ENCODE measurements at regions of chr3 and their contacts with region 1.

Region 1: GRCh38 chr3:120795017-120795648 is 52.6 kb downstream of the GTF2E1 start:
- DNase-seq: peak; percentile 75 to 80 (median 76)
- H3K4me3 ChIP-seq: no peak overlapping the region
- H3K4me3 Mint-ChIP-seq: no peak overlapping the region
- H3K27ac ChIP-seq: no peak overlapping the region
- H3K27ac Mint-ChIP-seq: no peak overlapping the region
- H3K4me1 ChIP-seq: no peaks in the 10 kb centered on the region
- H3K4me1 Mint-ChIP-seq: peaks cover 0 to 12% (median 4%) of the 10 kb centered on the region in 4 donors
- H3K27me3 ChIP-seq: no peaks in the 10 kb centered on the region
- H3K27me3 Mint-ChIP-seq: peaks cover 0 to 2% of the 10 kb centered on the region in 2 donors

Region 2: DNA sequence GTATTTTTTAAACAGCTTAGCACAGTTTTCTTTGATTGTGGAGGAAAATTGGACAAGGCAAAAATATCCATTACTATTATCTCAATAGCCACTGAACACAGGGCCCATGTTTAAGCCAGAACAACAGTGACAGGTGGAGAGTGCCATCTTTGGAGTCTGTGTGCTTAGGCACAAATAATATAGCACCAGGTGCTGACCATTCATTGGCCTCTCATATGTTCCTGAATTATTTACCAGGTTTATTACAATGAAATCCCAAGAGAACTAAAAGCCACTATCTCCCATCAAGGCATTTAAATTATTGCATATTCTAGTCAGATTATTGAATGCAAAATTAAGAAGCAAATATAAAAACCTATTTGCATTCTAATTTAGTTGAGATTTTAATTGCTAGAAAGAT is 549.7 kb before region 1 on chr3:
- CTCF ChIA-PET with region 1: interaction called, 10 read pairs
- POLR2A ChIA-PET with region 1: no interaction called
- intact Hi-C with region 1: loop called (anchors 1 kb)
- DNase-seq: no peak
- H3K4me3 ChIP-seq: no peak overlapping the region
- H3K4me3 Mint-ChIP-seq: no peak overlapping the region
- H3K27ac ChIP-seq: no peak overlapping the region
- H3K27ac Mint-ChIP-seq: no peak overlapping the region
- H3K4me1 ChIP-seq: no peaks in the 10 kb centered on the region
- H3K4me1 Mint-ChIP-seq: no peaks in the 10 kb centered on the region
- H3K27me3 ChIP-seq: peaks cover 4% of the 10 kb centered on the region
- H3K27me3 Mint-ChIP-seq: peaks cover 11 to 17% of the 10 kb centered on the region in 2 donors

Region 3: DNA sequence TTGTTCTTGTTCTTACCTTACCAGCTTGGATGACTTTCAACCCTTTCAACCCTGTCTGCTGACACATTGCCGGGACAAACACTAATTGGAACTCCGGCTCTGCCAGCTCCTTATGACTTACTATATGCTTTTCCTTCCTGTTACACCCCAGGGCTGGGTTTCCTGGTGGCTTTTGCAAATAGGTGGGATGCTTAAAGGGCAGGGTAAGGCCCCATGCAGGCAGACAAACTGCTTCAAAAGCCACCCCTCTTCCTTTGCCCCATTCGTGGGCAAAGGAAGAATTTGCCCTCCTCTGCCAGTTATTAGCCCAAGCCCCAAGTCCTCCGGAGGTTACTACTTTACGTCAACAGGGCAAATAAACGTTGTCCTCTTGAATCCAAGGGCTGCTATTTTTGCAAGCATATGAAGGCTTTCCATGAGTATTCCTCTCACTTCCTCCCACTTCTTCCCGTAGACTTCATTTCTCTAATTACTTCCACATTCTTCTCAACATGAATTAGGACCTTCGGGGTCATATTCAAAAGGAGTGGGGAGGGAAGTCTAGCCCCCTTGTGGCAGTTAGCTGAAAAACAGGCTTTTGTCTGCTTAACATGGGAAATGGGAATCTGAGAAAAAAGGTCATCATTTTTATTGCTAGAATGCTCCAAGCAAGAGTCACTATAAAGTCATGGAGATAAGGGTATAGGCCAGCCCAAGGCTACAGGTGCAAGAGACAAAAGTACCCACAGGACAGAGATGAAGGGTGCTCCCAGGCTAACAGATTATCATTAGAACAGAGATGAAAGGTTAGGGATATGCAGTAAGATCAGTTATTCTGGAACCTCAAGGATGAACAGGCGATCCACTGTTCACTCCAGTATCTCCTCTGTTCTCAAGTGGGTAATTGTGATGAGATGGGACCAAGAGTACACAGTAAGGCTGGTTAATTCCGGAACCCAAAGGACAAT is 288.0 kb before region 1 on chr3:
- CTCF ChIA-PET with region 1: no interaction called
- POLR2A ChIA-PET with region 1: no interaction called
- intact Hi-C with region 1: no loop called
- DNase-seq: peak in 2 of 5 donors; percentile 0 to 2
- H3K4me3 ChIP-seq: no peak overlapping the region
- H3K4me3 Mint-ChIP-seq: no peak overlapping the region
- H3K27ac ChIP-seq: no peak overlapping the region
- H3K27ac Mint-ChIP-seq: no peak overlapping the region
- H3K4me1 ChIP-seq: no peaks in the 10 kb centered on the region
- H3K4me1 Mint-ChIP-seq: no peaks in the 10 kb centered on the region
- H3K27me3 ChIP-seq: peaks cover 3% of the 10 kb centered on the region
- H3K27me3 Mint-ChIP-seq: peaks cover 7 to 16% of the 10 kb centered on the region in 2 donors

Region 4: DNA sequence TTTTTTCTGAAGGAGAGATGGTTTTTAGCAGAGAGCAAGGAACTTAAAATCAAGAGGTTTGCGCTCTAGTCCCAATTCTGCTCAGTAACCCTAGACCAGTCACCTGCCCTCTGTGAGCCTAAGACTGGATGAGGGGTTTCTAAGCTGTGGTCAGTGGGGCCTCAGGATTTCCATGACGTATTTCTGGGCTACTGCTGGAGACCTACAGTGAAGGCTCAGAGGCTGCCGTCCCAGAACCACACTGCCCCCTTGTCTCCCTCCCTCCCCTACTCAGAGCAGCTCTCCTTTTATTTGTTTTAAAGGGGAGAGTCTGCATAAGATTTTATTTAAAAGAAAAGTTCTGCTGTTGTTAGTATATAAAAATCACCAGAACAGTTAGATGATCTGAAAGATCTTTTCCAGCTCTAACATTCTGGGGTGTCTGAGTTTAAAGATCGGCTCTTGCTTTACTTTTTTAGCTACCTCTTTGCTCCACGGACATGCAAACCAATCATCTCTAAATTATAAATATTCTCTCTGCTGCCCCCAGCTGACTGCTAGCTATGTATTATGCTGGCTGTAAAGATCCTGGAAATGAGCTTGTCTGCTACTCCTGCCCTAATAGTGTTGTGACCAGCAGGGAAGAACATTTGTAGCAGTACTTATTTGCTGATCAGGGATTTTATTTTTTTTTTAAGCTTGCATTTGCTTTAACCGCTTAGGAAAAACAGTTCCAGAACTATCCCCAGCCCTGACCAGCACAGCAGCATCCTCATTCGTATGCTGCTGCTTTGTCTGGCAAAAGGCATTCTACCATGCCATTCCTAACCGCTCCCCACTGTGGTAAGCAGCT is 227.5 kb before region 1 on chr3:
- CTCF ChIA-PET with region 1: interaction called, 294 read pairs
- POLR2A ChIA-PET with region 1: interaction called, 5 read pairs
- intact Hi-C with region 1: no loop called
- DNase-seq: no peak
- H3K4me3 ChIP-seq: no peak overlapping the region
- H3K4me3 Mint-ChIP-seq: peak overlapping the region in 7 of 8 donors; percentile 27 to 81 (median 59)
- H3K27ac ChIP-seq: no peak overlapping the region
- H3K27ac Mint-ChIP-seq: peak overlapping the region in 4 of 7 donors; percentile 10 to 75 (median 39)
- H3K4me1 ChIP-seq: no peaks in the 10 kb centered on the region
- H3K4me1 Mint-ChIP-seq: peaks cover 0 to 3% (median 1%) of the 10 kb centered on the region in 4 donors
- H3K27me3 ChIP-seq: no peaks in the 10 kb centered on the region
- H3K27me3 Mint-ChIP-seq: peaks cover 2 to 9% of the 10 kb centered on the region in 2 donors

Region 5: GRCh38 chr3:120596116-120596852 is 198.8 kb before region 1 on chr3 and contains the start of gene NDUFB4:
- CTCF ChIA-PET with region 1: interaction called, 30 read pairs
- POLR2A ChIA-PET with region 1: interaction called, 6 read pairs
- intact Hi-C with region 1: loop called (anchors 1 kb)
- DNase-seq: peak; percentile 89 to 96 (median 96)
- H3K4me3 ChIP-seq: peak within 1 kb of the TSS; percentile 97 to 99
- H3K4me3 Mint-ChIP-seq: peak within 1 kb of the TSS; percentile 91 to 98 (median 95)
- H3K27ac ChIP-seq: peak within 1 kb of the TSS; percentile 98
- H3K27ac Mint-ChIP-seq: peak within 1 kb of the TSS in 6 of 7 donors; percentile 96 to 99 (median 98)
- H3K4me1 ChIP-seq: peaks cover 30% of the 10 kb centered on the region
- H3K4me1 Mint-ChIP-seq: peaks cover 6 to 8% (median 7%) of the 10 kb centered on the region in 4 donors
- H3K27me3 ChIP-seq: no peaks in the 10 kb centered on the region
- H3K27me3 Mint-ChIP-seq: no peaks in the 10 kb centered on the region
- total RNA-seq, gene NDUFB4: 82.1 to 82.8 TPM

Region 6: GRCh38 chr3:120601554-120601953 is 193.6 kb before region 1 on chr3:
- CTCF ChIA-PET with region 1: interaction called, 30 read pairs
- POLR2A ChIA-PET with region 1: interaction called, 6 read pairs
- intact Hi-C with region 1: loop called (anchors 1 kb)
- DNase-seq: no peak
- H3K4me3 ChIP-seq: no peak overlapping the region
- H3K4me3 Mint-ChIP-seq: no peak overlapping the region
- H3K27ac ChIP-seq: no peak overlapping the region
- H3K27ac Mint-ChIP-seq: peak overlapping the region in 2 of 7 donors; percentile 3 to 37
- H3K4me1 ChIP-seq: peaks cover 30% of the 10 kb centered on the region
- H3K4me1 Mint-ChIP-seq: peaks cover 0 to 8% (median 2%) of the 10 kb centered on the region in 4 donors
- H3K27me3 ChIP-seq: no peaks in the 10 kb centered on the region
- H3K27me3 Mint-ChIP-seq: no peaks in the 10 kb centered on the region

Region 7: DNA sequence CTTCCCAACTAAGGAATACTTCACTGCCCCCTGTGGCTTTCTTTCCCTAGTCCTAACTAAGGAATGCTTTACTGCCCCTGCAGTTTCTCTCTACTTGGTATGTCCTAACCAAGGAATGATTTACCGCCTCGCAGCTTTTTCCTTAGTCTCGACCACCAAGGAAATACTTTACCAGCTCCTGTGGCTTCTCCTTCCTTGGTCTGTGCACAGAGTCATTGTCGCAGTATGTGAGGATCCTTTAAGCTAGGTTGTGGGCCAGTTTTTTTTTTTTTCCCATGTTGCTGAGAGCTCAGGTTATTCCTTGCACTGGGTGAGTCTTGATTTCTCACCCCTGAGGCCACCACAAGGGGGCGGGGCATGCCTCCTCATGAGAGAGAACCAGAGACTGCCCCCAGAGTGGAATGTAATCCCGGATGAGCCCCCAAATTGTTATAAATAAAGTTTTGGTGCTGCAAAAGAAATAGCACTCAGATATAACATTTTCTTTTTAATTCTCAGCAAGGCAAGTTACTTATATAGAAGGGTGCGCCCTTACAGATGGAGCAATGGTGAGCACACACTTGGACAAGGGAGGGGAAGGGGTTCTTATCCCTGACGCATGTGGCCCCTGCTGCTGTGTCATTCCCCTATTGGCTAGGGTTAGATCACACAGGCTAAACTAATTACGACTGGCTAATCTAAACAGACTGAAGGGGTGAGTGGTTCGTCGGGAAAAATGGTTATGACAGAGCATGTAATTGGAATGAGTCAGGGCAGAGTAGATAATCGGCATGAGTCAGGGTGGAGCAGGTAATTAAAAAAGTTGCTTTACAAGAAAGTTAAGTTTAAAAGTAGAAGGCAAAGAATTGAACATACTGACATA is 172.0 kb before region 1 on chr3:
- CTCF ChIA-PET with region 1: interaction called, 4 read pairs
- POLR2A ChIA-PET with region 1: no interaction called
- intact Hi-C with region 1: loop called (anchors 1 kb)
- DNase-seq: peak in 3 of 5 donors; percentile 1 to 10 (median 5)
- H3K4me3 ChIP-seq: no peak overlapping the region
- H3K4me3 Mint-ChIP-seq: peak overlapping the region in 1 of 8 donors; percentile 39
- H3K27ac ChIP-seq: no peak overlapping the region
- H3K27ac Mint-ChIP-seq: no peak overlapping the region
- H3K4me1 ChIP-seq: no peaks in the 10 kb centered on the region
- H3K4me1 Mint-ChIP-seq: no peaks in the 10 kb centered on the region
- H3K27me3 ChIP-seq: no peaks in the 10 kb centered on the region
- H3K27me3 Mint-ChIP-seq: peaks cover 3 to 6% of the 10 kb centered on the region in 2 donors

Region 8: DNA sequence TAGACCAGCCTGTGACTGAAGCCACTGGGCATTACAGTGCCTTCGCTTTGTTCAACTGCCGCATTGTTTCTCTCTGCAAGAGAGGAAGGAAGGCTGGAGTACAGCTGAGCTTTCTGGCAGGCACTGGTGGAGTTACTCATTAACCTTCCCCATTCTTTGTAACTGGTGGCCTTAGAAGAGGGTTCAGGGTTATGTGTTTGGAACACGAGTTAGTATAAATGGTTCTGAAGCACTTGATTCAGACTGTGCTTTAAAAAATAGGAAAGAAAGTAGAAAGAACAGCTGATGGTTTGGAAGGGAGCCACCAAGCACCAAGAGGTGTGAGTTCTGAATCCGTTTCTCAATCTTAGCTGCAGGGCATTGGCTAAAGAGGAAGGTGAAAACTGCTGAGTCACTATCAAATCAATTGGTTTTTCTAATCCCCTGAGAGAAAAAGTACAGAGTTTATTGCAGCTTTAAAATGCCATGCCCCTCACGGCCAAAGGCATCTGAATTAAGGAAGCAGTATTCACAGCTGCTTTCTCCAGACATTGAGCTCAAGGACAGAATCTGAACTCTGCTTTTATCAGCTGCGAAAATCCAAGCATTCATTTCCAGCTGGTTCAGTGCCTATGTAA is 116.7 kb before region 1 on chr3:
- CTCF ChIA-PET with region 1: no interaction called
- POLR2A ChIA-PET with region 1: no interaction called
- intact Hi-C with region 1: no loop called
- DNase-seq: no peak
- H3K4me3 ChIP-seq: no peak overlapping the region
- H3K4me3 Mint-ChIP-seq: no peak overlapping the region
- H3K27ac ChIP-seq: no peak overlapping the region
- H3K27ac Mint-ChIP-seq: no peak overlapping the region
- H3K4me1 ChIP-seq: peaks cover 8% of the 10 kb centered on the region
- H3K4me1 Mint-ChIP-seq: peaks cover 0 to 5% (median 4%) of the 10 kb centered on the region in 4 donors
- H3K27me3 ChIP-seq: no peaks in the 10 kb centered on the region
- H3K27me3 Mint-ChIP-seq: peaks cover 4 to 7% of the 10 kb centered on the region in 2 donors

Region 9: DNA sequence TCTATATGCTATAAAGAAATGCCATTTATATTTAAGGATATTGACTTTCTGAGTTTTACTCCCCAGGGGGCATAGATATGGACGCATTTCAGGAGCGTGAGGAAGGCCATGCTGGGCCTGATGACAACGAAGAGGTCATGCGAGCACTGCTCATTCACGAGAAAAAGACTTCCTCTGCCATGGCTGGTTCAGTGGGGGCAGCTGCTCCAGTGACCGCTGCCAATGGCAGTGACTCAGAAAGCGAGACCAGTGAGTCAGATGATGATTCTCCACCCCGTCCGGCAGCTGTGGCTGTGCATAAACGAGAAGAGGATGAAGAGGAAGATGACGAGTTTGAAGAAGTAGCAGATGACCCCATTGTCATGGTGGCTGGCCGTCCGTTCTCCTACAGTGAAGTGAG is 14.2 kb before region 1 on chr3:
- CTCF ChIA-PET with region 1: interaction called, 18 read pairs
- POLR2A ChIA-PET with region 1: no interaction called
- intact Hi-C with region 1: no loop called
- DNase-seq: no peak
- H3K4me3 ChIP-seq: no peak overlapping the region
- H3K4me3 Mint-ChIP-seq: no peak overlapping the region
- H3K27ac ChIP-seq: no peak overlapping the region
- H3K27ac Mint-ChIP-seq: peak overlapping the region in 1 of 7 donors; percentile 84
- H3K4me1 ChIP-seq: no peaks in the 10 kb centered on the region
- H3K4me1 Mint-ChIP-seq: peaks cover 0 to 2% (median 0%) of the 10 kb centered on the region in 4 donors
- H3K27me3 ChIP-seq: no peaks in the 10 kb centered on the region
- H3K27me3 Mint-ChIP-seq: no peaks in the 10 kb centered on the region

Region 10: GRCh38 chr3:121718205-121718846 is 923.2 kb after region 1 on chr3:
- CTCF ChIA-PET with region 1: no interaction called
- POLR2A ChIA-PET with region 1: no interaction called
- intact Hi-C with region 1: no loop called
- DNase-seq: peak; percentile 34 to 52 (median 49)
- H3K4me3 ChIP-seq: no peak overlapping the region
- H3K4me3 Mint-ChIP-seq: peak overlapping the region; percentile 54 to 74 (median 66)
- H3K27ac ChIP-seq: peak overlapping the region; percentile 33
- H3K27ac Mint-ChIP-seq: peak overlapping the region; percentile 81 to 98 (median 94)
- H3K4me1 ChIP-seq: peaks cover 14% of the 10 kb centered on the region
- H3K4me1 Mint-ChIP-seq: peaks cover 19 to 30% (median 23%) of the 10 kb centered on the region in 4 donors
- H3K27me3 ChIP-seq: no peaks in the 10 kb centered on the region
- H3K27me3 Mint-ChIP-seq: no peaks in the 10 kb centered on the region

Region 11: GRCh38 chr3:122283796-122284445 is 1488.8 kb after region 1 on chr3:
- CTCF ChIA-PET with region 1: no interaction called
- POLR2A ChIA-PET with region 1: no interaction called
- intact Hi-C with region 1: no loop called
- DNase-seq: no peak
- H3K4me3 ChIP-seq: no peak overlapping the region
- H3K4me3 Mint-ChIP-seq: no peak overlapping the region
- H3K27ac ChIP-seq: no peak overlapping the region
- H3K27ac Mint-ChIP-seq: no peak overlapping the region
- H3K4me1 ChIP-seq: no peaks in the 10 kb centered on the region
- H3K4me1 Mint-ChIP-seq: peaks cover 0 to 1% (median 0%) of the 10 kb centered on the region in 4 donors
- H3K27me3 ChIP-seq: no peaks in the 10 kb centered on the region
- H3K27me3 Mint-ChIP-seq: peaks cover 0 to 1% of the 10 kb centered on the region in 2 donors